Transverse colon (tissue), 4 donors: ENCODE measurements at regions of chr17 and their contacts with region 1.

Region 1: DNA sequence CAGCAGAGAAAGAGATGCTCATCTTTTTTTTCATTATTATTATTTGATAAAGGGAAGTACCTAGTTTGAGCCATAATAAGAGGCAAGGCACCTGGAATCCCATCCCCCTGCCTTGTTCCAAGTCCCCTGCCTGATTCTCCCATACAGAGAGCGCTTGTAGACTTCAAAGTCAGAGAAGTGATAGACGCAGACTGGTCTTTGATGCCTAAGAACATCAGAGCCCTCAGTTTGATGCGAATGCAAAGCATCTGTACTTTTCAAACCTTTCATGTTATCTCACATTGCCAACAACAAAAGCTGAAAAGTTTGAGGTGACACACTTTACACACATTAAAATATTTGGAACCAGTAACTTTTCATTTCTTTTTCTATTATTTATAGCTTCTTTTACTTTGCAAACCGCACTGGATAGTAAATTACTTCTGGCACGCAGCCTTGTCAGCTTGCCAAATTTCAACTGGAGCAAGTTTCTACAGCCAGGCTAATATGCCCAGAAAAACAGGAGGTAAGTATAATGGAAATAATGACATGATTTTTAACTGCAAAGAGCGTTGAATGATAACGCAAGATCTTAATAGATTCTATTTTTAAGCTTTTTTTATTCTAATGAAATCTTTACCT is 5.9 kb upstream of the UTP6 start:
- DNase-seq: peak; percentile 40
- H3K4me3 ChIP-seq: no peak overlapping the region
- H3K27ac ChIP-seq: no peak overlapping the region
- H3K4me1 ChIP-seq: peaks cover 0 to 15% (median 7%) of the 10 kb centered on the region in 4 donors
- H3K27me3 ChIP-seq: peaks cover 10% of the 10 kb centered on the region
- CTCF ChIP-seq: no peak
- EP300 ChIP-seq: no peak
- POLR2A ChIP-seq: no peak

Region 2: DNA sequence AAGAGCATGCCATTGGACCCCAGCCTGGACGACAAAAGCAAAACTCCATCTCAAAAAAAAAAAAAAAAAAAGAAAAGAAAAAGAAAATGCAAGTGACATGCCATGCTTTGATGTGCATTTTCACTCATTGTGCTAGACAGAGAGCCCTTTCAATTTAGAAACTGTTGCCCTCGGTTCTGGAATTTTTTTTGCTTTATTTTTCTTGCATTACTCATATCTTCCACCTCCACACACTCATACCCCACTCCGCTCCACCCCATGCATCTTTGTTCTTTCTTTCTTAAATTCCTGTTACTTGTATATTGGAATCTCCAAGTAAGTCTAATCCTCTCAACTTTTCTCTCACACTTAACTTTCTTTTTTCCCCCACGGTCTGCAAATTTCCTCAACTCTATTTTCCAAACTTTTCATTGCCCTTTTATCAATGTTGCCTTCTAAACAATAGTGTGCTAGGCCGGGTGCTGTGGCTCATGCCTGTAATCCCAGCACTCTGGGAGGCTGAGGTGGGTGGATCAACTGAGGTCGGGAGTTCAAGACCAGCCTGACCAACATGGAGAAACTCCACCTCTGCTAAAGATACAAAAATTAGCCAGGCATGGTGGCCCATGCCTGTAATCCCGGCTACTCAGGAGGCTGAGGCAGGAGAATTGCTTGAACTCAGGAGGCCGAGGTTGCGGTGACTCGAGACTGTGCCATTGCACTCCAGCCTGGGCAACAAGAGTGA is 12.5 kb after region 1 on chr17:
- in situ Hi-C with region 1: no loop called
- intact Hi-C with region 1: loop called (anchors 2 kb)
- DNase-seq: no peak
- H3K4me3 ChIP-seq: no peak overlapping the region
- H3K27ac ChIP-seq: no peak overlapping the region
- H3K4me1 ChIP-seq: peaks cover 0 to 7% (median 1%) of the 10 kb centered on the region in 4 donors
- H3K27me3 ChIP-seq: peaks cover 36% of the 10 kb centered on the region
- CTCF ChIP-seq: no peak
- EP300 ChIP-seq: no peak
- POLR2A ChIP-seq: no peak

Region 3: DNA sequence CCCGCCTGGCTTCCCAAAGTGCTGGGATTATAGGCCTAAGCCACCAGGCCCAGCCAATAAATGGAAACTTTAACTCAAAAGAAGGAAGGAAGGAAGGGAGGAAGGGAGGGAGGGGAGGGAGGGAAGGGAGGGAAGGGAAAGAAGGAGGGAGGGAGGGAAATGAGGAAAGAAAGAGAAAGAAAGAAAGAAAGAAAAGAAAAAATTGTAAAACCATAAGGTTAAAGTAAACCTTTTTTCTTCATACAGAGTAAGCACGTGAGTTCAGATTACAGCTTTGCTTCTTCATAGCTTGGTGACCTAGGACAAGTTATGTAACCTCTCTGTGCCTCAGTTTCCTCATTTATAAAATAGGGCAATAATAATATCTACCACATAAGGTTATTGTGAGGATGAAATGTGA is 125.8 kb after region 1 on chr17:
- in situ Hi-C with region 1: no loop called
- intact Hi-C with region 1: no loop called
- DNase-seq: no peak
- H3K4me3 ChIP-seq: no peak overlapping the region
- H3K27ac ChIP-seq: no peak overlapping the region
- H3K4me1 ChIP-seq: no peaks in the 10 kb centered on the region
- H3K27me3 ChIP-seq: no peaks in the 10 kb centered on the region
- CTCF ChIP-seq: no peak
- EP300 ChIP-seq: no peak
- POLR2A ChIP-seq: no peak

Region 4: GRCh38 chr17:32152130-32152529 is 244.7 kb after region 1 on chr17:
- in situ Hi-C with region 1: no loop called
- intact Hi-C with region 1: no loop called
- DNase-seq: peak; percentile 31
- H3K4me3 ChIP-seq: no peak overlapping the region
- H3K27ac ChIP-seq: peak overlapping the region in 1 of 4 donors; percentile 47
- H3K4me1 ChIP-seq: peaks cover 0 to 14% (median 5%) of the 10 kb centered on the region in 4 donors
- H3K27me3 ChIP-seq: no peaks in the 10 kb centered on the region
- CTCF ChIP-seq: no peak
- EP300 ChIP-seq: no peak
- POLR2A ChIP-seq: no peak